Activated CD4-positive, alpha-beta T cell treated with anti-CD3 and anti-CD28 coated beads, Interleukin-2, amount 10 ng/mL, durations not matched to agents 24 days and 14 days (primary cell): ENCODE measurements at regions of chr1 and their contacts with region 1.

Region 1: DNA sequence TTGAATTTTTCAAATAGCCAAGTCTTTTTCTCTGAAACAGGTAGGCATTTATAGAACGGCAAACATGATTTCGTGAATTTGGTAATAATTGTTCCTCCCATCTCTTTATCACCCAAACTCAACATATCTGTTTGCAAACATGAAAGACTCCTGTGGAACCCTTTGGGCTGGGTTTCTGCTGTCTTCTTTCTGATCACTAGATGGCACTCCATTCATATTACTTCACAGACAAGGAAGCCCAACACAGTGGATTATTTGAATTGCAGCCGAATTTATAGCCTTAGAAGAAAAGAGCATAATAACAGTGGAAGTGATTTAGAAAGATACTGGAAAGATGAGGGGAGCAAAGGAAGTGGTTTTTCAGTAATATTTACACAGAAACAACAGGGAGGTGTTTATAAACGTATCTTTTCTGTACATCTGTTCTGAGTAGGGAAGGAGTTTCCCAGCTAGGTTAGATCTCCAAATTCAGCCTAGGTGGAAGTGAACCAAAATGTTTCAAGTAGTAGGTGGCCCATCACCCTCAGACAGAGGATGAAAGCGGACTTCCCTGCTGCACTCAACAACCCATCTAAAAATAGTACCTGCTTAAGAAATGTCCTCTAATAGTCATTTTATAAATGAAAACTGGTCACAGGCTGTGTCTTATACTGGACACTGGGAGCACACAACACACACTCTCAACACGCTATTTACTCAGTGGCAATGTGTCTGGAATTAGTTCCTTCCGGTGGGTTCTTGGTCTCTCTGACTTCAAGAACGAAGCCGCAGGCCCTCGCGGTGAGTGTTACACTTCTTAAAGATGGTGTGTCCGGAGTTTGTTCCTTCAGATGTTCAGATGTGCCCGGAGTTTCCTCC is 67.6 kb downstream of the MAP3K21 start:
- DNase-seq: peak; percentile 82
- H3K4me3 Mint-ChIP-seq: no peak overlapping the region
- H3K27ac Mint-ChIP-seq: no peak overlapping the region
- H3K4me1 Mint-ChIP-seq: no peaks in the 10 kb centered on the region
- H3K27me3 Mint-ChIP-seq: peaks cover 37% of the 10 kb centered on the region

Region 2: DNA sequence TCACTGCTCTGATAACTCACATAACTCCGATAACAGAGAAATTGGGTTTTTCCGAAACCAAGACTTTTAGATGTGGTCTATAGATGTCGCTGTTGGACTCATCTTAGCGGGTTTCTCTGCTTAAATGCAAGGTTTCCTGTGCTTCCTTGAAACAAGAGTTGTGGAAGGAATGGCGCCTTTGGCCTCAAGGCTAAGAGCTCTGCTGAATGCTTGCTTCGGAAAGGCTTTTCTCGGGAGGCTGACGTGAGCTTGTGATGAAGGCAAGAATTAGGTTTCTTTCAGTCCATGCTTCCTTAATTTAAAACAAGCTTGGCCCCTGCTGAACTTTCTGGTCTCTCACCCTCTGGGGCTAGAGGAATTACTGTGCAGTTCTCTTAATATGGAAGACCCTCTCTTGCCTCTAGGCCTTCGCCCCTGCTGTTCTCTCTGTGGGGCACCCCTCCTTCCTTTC is 45.9 kb after region 1 on chr1:
- intact Hi-C with region 1: loop called (anchors 5 kb)
- DNase-seq: peak; percentile 69
- H3K4me3 Mint-ChIP-seq: no peak overlapping the region
- H3K27ac Mint-ChIP-seq: no peak overlapping the region
- H3K4me1 Mint-ChIP-seq: no peaks in the 10 kb centered on the region
- H3K27me3 Mint-ChIP-seq: peaks cover 18% of the 10 kb centered on the region